ENCODE measurements at regions of chr7 and their contacts with region 1.

Region 1: GRCh38 chr7:37352974-37353948 is 95.4 kb downstream of the ELMO1 start:
- DNase-seq: peak; percentile 89 to 95 (median 92)
- H3K4me3 ChIP-seq: peak overlapping the region; percentile 61 to 92 (median 82)
- H3K27ac ChIP-seq: peak overlapping the region; percentile 93 to 97
- H3K4me1 ChIP-seq: peaks cover 36 to 90% (median 80%) of the 10 kb centered on the region in 4 experiments
- H3K27me3 ChIP-seq: no peaks in the 10 kb centered on the region

Region 2: GRCh38 chr7:37284805-37285231 is 68.4 kb before region 1 on chr7:
- CTCF ChIA-PET with region 1: interaction called, 35 read pairs
- POLR2A ChIA-PET with region 1: no interaction called
- DNase-seq: peak in 1 of 3 donors; percentile 26
- H3K4me3 ChIP-seq: peak overlapping the region in 2 of 7 experiments; percentile 7
- H3K27ac ChIP-seq: no peak overlapping the region
- H3K4me1 ChIP-seq: peaks cover 17 to 61% (median 55%) of the 10 kb centered on the region in 4 experiments
- H3K27me3 ChIP-seq: no peaks in the 10 kb centered on the region

Region 3: GRCh38 chr7:37342688-37343471 is 10.4 kb before region 1 on chr7:
- CTCF ChIA-PET with region 1: interaction called, 14 read pairs
- POLR2A ChIA-PET with region 1: interaction called, 8 read pairs
- DNase-seq: peak; percentile 94 to 97 (median 95)
- H3K4me3 ChIP-seq: peak overlapping the region; percentile 18 to 97 (median 87)
- H3K27ac ChIP-seq: peak overlapping the region; percentile 91 to 93
- H3K4me1 ChIP-seq: peaks cover 42 to 94% (median 64%) of the 10 kb centered on the region in 4 experiments
- H3K27me3 ChIP-seq: no peaks in the 10 kb centered on the region

Region 4: GRCh38 chr7:37391791-37392672 is 38.8 kb after region 1 on chr7:
- CTCF ChIA-PET with region 1: interaction called, 15 read pairs
- POLR2A ChIA-PET with region 1: interaction called, 6 read pairs
- DNase-seq: peak; percentile 57 to 90 (median 85)
- H3K4me3 ChIP-seq: peak overlapping the region in 5 of 7 experiments; percentile 23 to 45 (median 32)
- H3K27ac ChIP-seq: peak overlapping the region; percentile 55 to 69
- H3K4me1 ChIP-seq: peaks cover 36 to 80% (median 59%) of the 10 kb centered on the region in 4 experiments
- H3K27me3 ChIP-seq: no peaks in the 10 kb centered on the region

Region 5: GRCh38 chr7:37488163-37488764 is 135.0 kb after region 1 on chr7:
- CTCF ChIA-PET with region 1: no interaction called
- POLR2A ChIA-PET with region 1: no interaction called
- DNase-seq: no peak
- H3K4me3 ChIP-seq: no peak overlapping the region
- H3K27ac ChIP-seq: no peak overlapping the region
- H3K4me1 ChIP-seq: peaks cover 0 to 3% (median 0%) of the 10 kb centered on the region in 4 experiments
- H3K27me3 ChIP-seq: no peaks in the 10 kb centered on the region

Region 6: GRCh38 chr7:37524797-37525196 is 171.5 kb after region 1 on chr7:
- CTCF ChIA-PET with region 1: no interaction called
- POLR2A ChIA-PET with region 1: no interaction called
- DNase-seq: no peak
- H3K4me3 ChIP-seq: no peak overlapping the region
- H3K27ac ChIP-seq: no peak overlapping the region
- H3K4me1 ChIP-seq: peaks cover 0 to 19% (median 6%) of the 10 kb centered on the region in 4 experiments
- H3K27me3 ChIP-seq: no peaks in the 10 kb centered on the region

Region 7: DNA sequence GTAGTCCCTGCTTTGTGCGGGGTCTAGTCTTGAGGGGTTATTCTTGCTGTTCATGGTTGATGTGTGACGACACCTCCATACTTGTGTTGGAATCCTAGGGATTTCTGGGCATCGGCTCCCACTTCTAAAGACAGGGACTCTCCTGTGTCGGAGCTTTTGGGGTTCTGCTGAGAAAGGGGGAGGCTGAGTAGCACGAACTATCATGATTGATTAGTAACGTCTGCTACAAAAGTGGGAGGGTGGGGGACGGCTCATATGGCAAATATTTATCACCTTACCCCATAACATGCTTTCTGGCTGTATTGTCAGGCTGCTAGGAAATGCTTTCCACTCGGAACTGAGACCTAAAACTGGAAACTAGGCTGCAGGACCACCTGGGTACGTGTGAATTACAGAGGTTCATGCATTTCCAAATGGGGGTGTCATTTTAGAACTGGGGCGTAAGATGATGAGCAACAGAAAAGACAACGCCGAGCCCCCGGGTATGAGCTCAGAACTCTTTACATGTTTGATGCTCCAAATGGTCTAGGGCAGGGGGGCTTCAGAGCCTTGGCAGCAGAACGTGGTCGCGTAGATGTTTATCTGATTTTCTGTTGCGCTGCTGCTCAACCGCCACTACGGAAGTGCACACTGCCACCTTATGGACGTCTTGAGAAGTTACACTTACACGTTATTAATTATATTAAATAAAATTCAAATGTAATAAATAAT is 480.0 kb after region 1 on chr7:
- CTCF ChIA-PET with region 1: interaction called, 13 read pairs
- POLR2A ChIA-PET with region 1: no interaction called
- DNase-seq: peak; percentile 80 to 91 (median 89)
- H3K4me3 ChIP-seq: peak overlapping the region; percentile 38 to 87 (median 66)
- H3K27ac ChIP-seq: no peak overlapping the region
- H3K4me1 ChIP-seq: peaks cover 5 to 15% (median 7%) of the 10 kb centered on the region in 4 experiments
- H3K27me3 ChIP-seq: no peaks in the 10 kb centered on the region